Activated CD4-positive, alpha-beta T cell treated with anti-CD3 and anti-CD28 coated beads for 36 hours (primary cell): ENCODE measurements at regions of chr14 and their contacts with region 1.

Region 1: GRCh38 chr14:74612350-74613021 is 449 bp upstream of the LTBP2 start:
- DNase-seq: peak; percentile 91
- ATAC-seq: peak; percentile 86
- H3K4me3 Mint-ChIP-seq: peak overlapping the region; percentile 62
- H3K27ac Mint-ChIP-seq: no peak overlapping the region
- H3K4me1 Mint-ChIP-seq: peaks cover 25% of the 10 kb centered on the region
- H3K27me3 Mint-ChIP-seq: peaks cover 15% of the 10 kb centered on the region

Region 2: GRCh38 chr14:74302634-74303577 is 309.6 kb before region 1 on chr14 and contains the start of gene ABCD4:
- CTCF ChIA-PET with region 1: interaction called, 3 read pairs
- POLR2A ChIA-PET with region 1: no interaction called
- intact Hi-C with region 1: loop called in 1 of 2 experiments (anchors 1 kb)
- DNase-seq: peak; percentile 91
- ATAC-seq: peak; percentile 95
- H3K4me3 Mint-ChIP-seq: peak within 1 kb of the TSS; percentile 98
- H3K27ac Mint-ChIP-seq: peak within 1 kb of the TSS; percentile 98
- H3K4me1 Mint-ChIP-seq: peaks cover 32% of the 10 kb centered on the region
- H3K27me3 Mint-ChIP-seq: no peaks in the 10 kb centered on the region
- total RNA-seq, gene ABCD4: 43.0 to 43.1 TPM

Region 3: GRCh38 chr14:74599321-74599761 is 13.1 kb before region 1 on chr14:
- CTCF ChIA-PET with region 1: interaction called, 10 read pairs
- POLR2A ChIA-PET with region 1: no interaction called
- intact Hi-C with region 1: no loop called
- DNase-seq: no peak
- ATAC-seq: no peak
- H3K4me3 Mint-ChIP-seq: no peak overlapping the region
- H3K27ac Mint-ChIP-seq: no peak overlapping the region
- H3K4me1 Mint-ChIP-seq: no peaks in the 10 kb centered on the region
- H3K27me3 Mint-ChIP-seq: no peaks in the 10 kb centered on the region

Region 4: DNA sequence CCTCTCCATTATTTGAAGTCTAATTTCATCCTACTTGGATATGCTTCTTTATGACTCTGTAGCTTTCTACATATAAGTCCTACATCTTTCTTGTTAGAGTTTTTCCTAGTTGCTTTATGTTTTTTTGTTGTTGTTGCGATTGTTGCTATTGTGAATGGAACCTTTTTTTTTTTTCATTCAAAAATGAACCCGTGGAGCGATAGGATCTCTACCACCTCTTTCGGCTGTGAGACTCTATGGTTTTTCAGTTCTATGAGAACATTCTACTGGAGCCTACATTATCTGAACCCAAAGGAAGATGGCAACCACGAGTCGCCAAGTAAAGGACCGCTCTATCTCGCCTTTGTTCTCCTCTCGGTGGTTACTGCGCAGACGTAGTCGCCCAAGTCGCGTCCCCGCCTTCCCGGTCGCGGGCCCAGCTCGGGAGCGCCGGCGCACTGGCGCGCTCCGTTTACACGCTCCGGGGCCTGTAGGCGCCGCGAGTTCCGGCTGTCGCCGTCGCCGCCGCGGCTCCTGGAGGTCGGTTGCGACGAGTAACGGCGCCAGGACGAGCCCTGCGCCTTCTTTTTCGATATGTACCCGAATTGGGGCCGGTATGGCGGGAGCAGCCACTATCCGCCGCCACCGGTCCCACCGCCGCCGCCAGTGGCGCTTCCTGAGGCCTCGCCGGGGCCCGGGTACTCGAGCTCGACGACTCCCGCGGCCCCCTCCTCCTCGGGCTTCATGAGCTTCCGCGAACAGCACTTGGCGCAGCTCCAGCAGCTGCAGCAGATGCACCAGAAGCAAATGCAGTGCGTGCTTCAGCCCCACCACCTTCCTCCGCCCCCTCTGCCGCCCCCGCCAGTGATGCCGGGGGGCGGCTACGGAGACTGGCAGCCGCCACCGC is 150.7 kb after region 1 on chr14 and contains the start of gene YLPM1:
- CTCF ChIA-PET with region 1: interaction called, 9 read pairs
- POLR2A ChIA-PET with region 1: interaction called, 3 read pairs
- intact Hi-C with region 1: loop called in 1 of 2 experiments (anchors 1 kb)
- DNase-seq: peak; percentile 95
- ATAC-seq: peak; percentile 92
- H3K4me3 Mint-ChIP-seq: peak within 1 kb of the TSS; percentile 96
- H3K27ac Mint-ChIP-seq: peak within 1 kb of the TSS; percentile 97
- H3K4me1 Mint-ChIP-seq: peaks cover 42% of the 10 kb centered on the region
- H3K27me3 Mint-ChIP-seq: no peaks in the 10 kb centered on the region
- total RNA-seq, gene YLPM1: 53.0 to 60.9 TPM

Region 5: DNA sequence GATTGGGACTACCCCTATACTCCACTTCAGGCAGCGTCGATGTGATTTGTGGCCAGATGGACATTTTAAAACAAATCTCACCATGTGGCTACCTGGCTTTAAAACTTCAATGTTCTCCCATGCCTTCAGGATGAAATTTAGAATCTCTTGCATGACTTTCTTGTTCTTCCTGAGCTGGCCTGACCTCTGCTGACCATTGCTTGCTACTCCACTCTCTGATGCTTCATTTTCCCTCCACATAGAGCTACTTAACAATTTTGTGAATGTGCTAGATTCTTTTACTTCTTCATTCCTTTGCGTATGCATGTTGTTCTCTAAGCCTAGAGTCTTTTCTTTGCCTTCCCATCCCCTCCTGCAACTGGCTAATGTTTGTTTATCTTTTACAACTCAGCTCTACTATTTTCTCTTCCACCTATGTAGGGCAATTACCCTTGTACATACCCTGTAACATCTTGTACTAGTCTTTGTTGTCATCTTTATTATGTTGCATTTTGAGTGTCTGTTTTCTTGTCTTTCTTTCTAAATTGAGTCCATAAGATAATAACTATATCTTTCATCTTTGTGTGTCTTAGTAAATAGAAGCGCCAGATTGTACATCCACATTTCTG is 191.8 kb after region 1 on chr14:
- CTCF ChIA-PET with region 1: interaction called, 9 read pairs
- POLR2A ChIA-PET with region 1: no interaction called
- intact Hi-C with region 1: loop called (anchors 1 to 2 kb)
- DNase-seq: peak; percentile 43
- ATAC-seq: peak; percentile 44
- H3K4me3 Mint-ChIP-seq: no peak overlapping the region
- H3K27ac Mint-ChIP-seq: no peak overlapping the region
- H3K4me1 Mint-ChIP-seq: no peaks in the 10 kb centered on the region
- H3K27me3 Mint-ChIP-seq: no peaks in the 10 kb centered on the region

Region 6: GRCh38 chr14:74881431-74882361 is 269.2 kb after region 1 on chr14 and contains the start of gene DLST:
- CTCF ChIA-PET with region 1: no interaction called
- POLR2A ChIA-PET with region 1: no interaction called
- intact Hi-C with region 1: loop called in 1 of 2 experiments (anchors 1 kb)
- DNase-seq: peak; percentile 92
- ATAC-seq: peak; percentile 89
- H3K4me3 Mint-ChIP-seq: peak within 1 kb of the TSS; percentile 99
- H3K27ac Mint-ChIP-seq: peak within 1 kb of the TSS; percentile 96
- H3K4me1 Mint-ChIP-seq: peaks cover 64% of the 10 kb centered on the region
- H3K27me3 Mint-ChIP-seq: no peaks in the 10 kb centered on the region
- total RNA-seq, gene DLST: 103 to 120 TPM

Region 7: GRCh38 chr14:75002392-75003249 is 390.1 kb after region 1 on chr14 and contains the start of gene EIF2B2:
- CTCF ChIA-PET with region 1: no interaction called
- POLR2A ChIA-PET with region 1: no interaction called
- intact Hi-C with region 1: loop called in 1 of 2 experiments (anchors 5 kb)
- DNase-seq: peak; percentile 99
- ATAC-seq: peak; percentile 97
- H3K4me3 Mint-ChIP-seq: peak within 1 kb of the TSS; percentile 87
- H3K27ac Mint-ChIP-seq: peak within 1 kb of the TSS; percentile 88
- H3K4me1 Mint-ChIP-seq: peaks cover 34% of the 10 kb centered on the region
- H3K27me3 Mint-ChIP-seq: no peaks in the 10 kb centered on the region
- total RNA-seq, gene EIF2B2: 55.6 to 69.8 TPM